Tibial artery (tissue), 4 donors: ENCODE measurements at regions of chr3 and their contacts with region 1.

Region 1: GRCh38 chr3:120742198-120742849 is at the starts of genes GTF2E1 and RABL3:
- DNase-seq: peak; percentile 98
- H3K4me3 ChIP-seq: peak within 1 kb of the TSS; percentile 68 to 93
- H3K27ac ChIP-seq: peak within 1 kb of the TSS; percentile 89 to 91
- H3K4me1 ChIP-seq: peaks cover 0 to 18% (median 12%) of the 10 kb centered on the region in 4 donors
- H3K27me3 ChIP-seq: no peaks in the 10 kb centered on the region
- CTCF ChIP-seq: no peak

Region 2: DNA sequence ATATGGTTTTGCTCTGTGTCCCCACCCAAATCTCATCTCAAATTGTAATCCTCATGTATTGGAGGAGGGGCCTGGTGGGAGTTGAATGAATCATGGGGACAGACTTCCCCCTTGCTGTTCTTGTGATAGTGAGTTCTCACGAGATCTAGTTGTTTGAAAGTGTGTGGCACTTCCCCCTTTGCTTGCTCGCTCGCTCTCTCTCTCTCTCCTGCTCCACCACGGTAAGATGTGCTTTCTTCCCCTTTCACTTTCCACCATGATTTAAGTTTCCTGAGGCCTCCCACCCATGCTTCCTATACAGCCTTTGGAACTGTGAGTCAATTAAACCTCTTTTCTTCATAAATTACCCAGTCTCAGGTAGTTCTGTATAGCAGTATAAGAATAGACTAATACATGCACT is 708.7 kb before region 1 on chr3:
- intact Hi-C with region 1: no loop called
- DNase-seq: no peak
- H3K4me3 ChIP-seq: no peak overlapping the region
- H3K27ac ChIP-seq: no peak overlapping the region
- H3K4me1 ChIP-seq: peaks cover 0 to under 1% (median 0%) of the 10 kb centered on the region in 4 donors
- H3K27me3 ChIP-seq: no peaks in the 10 kb centered on the region
- CTCF ChIP-seq: no peak

Region 3: GRCh38 chr3:120095226-120095978 is 646.9 kb before region 1 on chr3:
- intact Hi-C with region 1: loop called (anchors 10 kb)
- DNase-seq: peak; percentile 86 to 93
- H3K4me3 ChIP-seq: peak overlapping the region; percentile 64 to 95
- H3K27ac ChIP-seq: peak overlapping the region; percentile 92 to 97
- H3K4me1 ChIP-seq: peaks cover 0 to 26% (median 11%) of the 10 kb centered on the region in 4 donors
- H3K27me3 ChIP-seq: no peaks in the 10 kb centered on the region
- CTCF ChIP-seq: peak in 1 of 2 experiments; percentile 1

Region 4: DNA sequence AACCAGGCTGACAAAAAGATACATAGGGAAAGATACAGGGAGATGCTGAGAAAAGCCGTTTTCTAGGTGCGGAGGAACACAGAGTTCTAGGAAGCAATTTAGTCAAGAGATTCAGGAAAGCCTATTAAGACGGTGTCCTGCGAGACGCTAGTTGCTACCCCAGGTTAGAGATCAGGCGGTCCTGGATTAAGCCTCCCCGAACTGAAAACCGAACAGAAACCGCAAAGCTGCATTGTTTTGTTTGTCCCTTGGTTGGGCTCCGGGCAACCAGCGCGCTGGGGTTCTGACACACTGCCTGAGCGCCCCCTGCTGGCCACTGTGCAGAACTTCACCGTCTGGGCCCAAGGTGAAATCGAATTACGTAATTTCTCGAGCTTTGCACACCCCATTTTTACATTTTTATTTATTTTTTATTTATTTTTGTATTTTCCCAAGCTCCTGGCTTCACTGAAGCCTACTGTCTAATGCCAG is 183.5 kb before region 1 on chr3:
- intact Hi-C with region 1: loop called (anchors 10 kb)
- DNase-seq: peak; percentile 91 to 92
- H3K4me3 ChIP-seq: peak overlapping the region; percentile 50 to 57
- H3K27ac ChIP-seq: peak overlapping the region; percentile 73 to 85
- H3K4me1 ChIP-seq: peaks cover 0 to 54% (median 33%) of the 10 kb centered on the region in 4 donors
- H3K27me3 ChIP-seq: no peaks in the 10 kb centered on the region
- CTCF ChIP-seq: peak; percentile 93 to 97

Region 5: DNA sequence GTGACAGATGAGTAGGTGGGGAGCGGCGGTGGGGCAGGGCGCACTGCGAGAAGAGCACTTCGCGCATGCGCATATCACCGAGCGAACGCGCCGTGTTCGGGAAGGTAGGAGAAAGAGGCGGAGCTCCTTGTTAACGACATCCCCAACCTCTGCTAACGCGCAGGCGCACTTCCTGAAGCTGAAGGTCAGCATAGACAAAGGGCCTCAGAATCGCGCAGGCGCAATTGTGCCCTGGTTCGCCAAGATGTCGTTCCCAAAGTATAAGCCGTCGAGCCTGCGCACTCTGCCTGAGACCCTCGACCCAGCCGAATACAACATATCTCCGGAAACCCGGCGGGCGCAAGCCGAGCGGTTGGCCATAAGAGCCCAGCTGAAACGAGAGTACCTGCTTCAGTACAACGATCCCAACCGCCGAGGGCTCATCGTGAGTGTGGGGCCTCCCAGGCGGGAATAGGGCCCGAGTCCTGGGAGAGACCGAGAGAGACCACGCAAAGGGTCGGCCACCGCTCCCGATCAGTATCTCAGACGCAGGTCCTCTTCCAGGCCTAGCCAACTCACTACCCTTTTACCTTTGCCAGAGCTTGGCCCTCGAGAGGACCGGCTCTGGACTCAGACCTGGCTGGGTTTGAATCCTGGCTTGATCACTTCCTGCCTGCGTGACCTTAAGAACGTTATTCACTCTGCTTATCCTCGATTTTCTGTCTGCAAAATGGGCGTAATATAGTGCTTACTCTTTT is 146.0 kb before region 1 on chr3 and contains the start of gene NDUFB4:
- intact Hi-C with region 1: loop called (anchors 5 kb)
- DNase-seq: peak; percentile 96 to 98
- H3K4me3 ChIP-seq: peak within 1 kb of the TSS; percentile 65 to 66
- H3K27ac ChIP-seq: peak within 1 kb of the TSS; percentile 81 to 83
- H3K4me1 ChIP-seq: peaks cover 0 to 44% (median 29%) of the 10 kb centered on the region in 4 donors
- H3K27me3 ChIP-seq: no peaks in the 10 kb centered on the region
- CTCF ChIP-seq: no peak

Region 6: DNA sequence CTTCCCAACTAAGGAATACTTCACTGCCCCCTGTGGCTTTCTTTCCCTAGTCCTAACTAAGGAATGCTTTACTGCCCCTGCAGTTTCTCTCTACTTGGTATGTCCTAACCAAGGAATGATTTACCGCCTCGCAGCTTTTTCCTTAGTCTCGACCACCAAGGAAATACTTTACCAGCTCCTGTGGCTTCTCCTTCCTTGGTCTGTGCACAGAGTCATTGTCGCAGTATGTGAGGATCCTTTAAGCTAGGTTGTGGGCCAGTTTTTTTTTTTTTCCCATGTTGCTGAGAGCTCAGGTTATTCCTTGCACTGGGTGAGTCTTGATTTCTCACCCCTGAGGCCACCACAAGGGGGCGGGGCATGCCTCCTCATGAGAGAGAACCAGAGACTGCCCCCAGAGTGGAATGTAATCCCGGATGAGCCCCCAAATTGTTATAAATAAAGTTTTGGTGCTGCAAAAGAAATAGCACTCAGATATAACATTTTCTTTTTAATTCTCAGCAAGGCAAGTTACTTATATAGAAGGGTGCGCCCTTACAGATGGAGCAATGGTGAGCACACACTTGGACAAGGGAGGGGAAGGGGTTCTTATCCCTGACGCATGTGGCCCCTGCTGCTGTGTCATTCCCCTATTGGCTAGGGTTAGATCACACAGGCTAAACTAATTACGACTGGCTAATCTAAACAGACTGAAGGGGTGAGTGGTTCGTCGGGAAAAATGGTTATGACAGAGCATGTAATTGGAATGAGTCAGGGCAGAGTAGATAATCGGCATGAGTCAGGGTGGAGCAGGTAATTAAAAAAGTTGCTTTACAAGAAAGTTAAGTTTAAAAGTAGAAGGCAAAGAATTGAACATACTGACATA is 119.2 kb before region 1 on chr3:
- intact Hi-C with region 1: no loop called
- DNase-seq: no peak
- H3K4me3 ChIP-seq: no peak overlapping the region
- H3K27ac ChIP-seq: no peak overlapping the region
- H3K4me1 ChIP-seq: no peaks in the 10 kb centered on the region
- H3K27me3 ChIP-seq: no peaks in the 10 kb centered on the region
- CTCF ChIP-seq: no peak

Region 7: GRCh38 chr3:120708408-120708807 is 33.9 kb before region 1 on chr3:
- intact Hi-C with region 1: no loop called
- DNase-seq: no peak
- H3K4me3 ChIP-seq: no peak overlapping the region
- H3K27ac ChIP-seq: no peak overlapping the region
- H3K4me1 ChIP-seq: no peaks in the 10 kb centered on the region
- H3K27me3 ChIP-seq: no peaks in the 10 kb centered on the region
- CTCF ChIP-seq: no peak

Region 8: GRCh38 chr3:121749276-121750086 is 1007.2 kb after region 1 on chr3 and contains the start of gene GOLGB1:
- intact Hi-C with region 1: loop called (anchors 10 kb)
- DNase-seq: peak; percentile 96
- H3K4me3 ChIP-seq: peak within 1 kb of the TSS; percentile 62 to 96
- H3K27ac ChIP-seq: peak within 1 kb of the TSS; percentile 86 to 97
- H3K4me1 ChIP-seq: peaks cover 0 to 42% (median 20%) of the 10 kb centered on the region in 4 donors
- H3K27me3 ChIP-seq: no peaks in the 10 kb centered on the region
- CTCF ChIP-seq: no peak